CD8-positive, alpha-beta T cell (primary cell): ENCODE measurements at regions of chr1 and their contacts with region 1.

Region 1: DNA sequence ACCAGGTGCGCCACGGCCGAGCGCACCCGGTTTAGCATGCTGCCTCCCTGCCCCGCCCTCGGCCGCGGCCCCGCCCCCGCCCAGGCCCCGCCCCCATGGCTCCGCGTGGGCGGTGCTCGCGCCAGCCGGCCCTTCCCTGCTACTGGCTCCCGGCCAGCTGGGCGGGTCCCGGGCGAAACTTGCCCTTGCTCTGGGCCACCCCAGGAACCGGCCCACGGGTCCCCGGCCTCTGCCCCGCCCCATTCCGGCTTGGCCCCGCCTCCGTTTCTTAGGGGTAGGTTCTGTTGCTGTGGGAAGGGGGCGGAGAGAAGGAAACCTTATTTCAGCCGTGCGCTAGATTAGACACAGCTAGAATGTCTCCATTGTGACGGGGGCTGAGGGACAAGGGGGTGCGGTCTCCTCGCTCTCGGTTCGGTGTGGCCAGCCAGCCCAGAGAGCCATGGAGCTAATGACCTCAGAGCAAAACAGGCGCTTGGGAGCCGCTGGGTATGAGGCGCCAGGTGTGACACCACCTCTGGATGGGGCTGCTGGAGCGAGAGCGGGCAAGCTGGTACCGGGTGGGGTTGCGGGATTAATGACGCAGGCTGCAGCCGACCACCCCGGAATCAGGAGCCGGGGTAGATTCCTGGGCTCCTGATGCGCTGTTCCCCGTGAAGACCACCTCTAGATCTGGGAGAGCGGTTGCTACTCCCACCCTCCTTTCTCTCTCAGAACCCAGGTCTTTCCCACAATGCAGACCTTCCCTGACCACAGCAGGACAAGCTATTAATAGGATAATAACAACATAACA is at the start of gene PPM1J:
- DNase-seq: peak; percentile 90 to 97 (median 95)
- ATAC-seq: peak; percentile 82
- H3K4me3 ChIP-seq: peak within 1 kb of the TSS; percentile 52 to 67
- H3K4me3 Mint-ChIP-seq: peak within 1 kb of the TSS; percentile 90
- H3K27ac ChIP-seq: peak within 1 kb of the TSS; percentile 10 to 42
- H3K27ac Mint-ChIP-seq: peak within 1 kb of the TSS; percentile 88
- H3K4me1 ChIP-seq: peaks cover 25% of the 10 kb centered on the region
- H3K4me1 Mint-ChIP-seq: peaks cover 21% of the 10 kb centered on the region
- H3K27me3 ChIP-seq: peaks cover 0 to 10% of the 10 kb centered on the region in 2 experiments
- H3K27me3 Mint-ChIP-seq: peaks cover 12% of the 10 kb centered on the region
- CTCF ChIP-seq: no peak
- total RNA-seq, gene PPM1J: 0.57 to 0.69 TPM

Region 2: GRCh38 chr1:112390775-112391602 is 324.5 kb before region 1 on chr1:
- CTCF ChIA-PET with region 1: interaction called, 32 read pairs
- POLR2A ChIA-PET with region 1: interaction called, 3 read pairs
- intact Hi-C with region 1: loop called in 1 of 2 experiments (anchors 1 kb)
- DNase-seq: peak; percentile 51 to 89 (median 75)
- ATAC-seq: peak; percentile 89
- H3K4me3 ChIP-seq: no peak overlapping the region
- H3K4me3 Mint-ChIP-seq: no peak overlapping the region
- H3K27ac ChIP-seq: no peak overlapping the region
- H3K27ac Mint-ChIP-seq: no peak overlapping the region
- H3K4me1 ChIP-seq: peaks cover 10% of the 10 kb centered on the region
- H3K4me1 Mint-ChIP-seq: peaks cover 10% of the 10 kb centered on the region
- H3K27me3 ChIP-seq: peaks cover 7 to 11% of the 10 kb centered on the region in 2 experiments
- H3K27me3 Mint-ChIP-seq: peaks cover 46% of the 10 kb centered on the region
- CTCF ChIP-seq: peak; percentile 85

Region 3: GRCh38 chr1:112619520-112620376 is 95.7 kb before region 1 on chr1 and contains the start of gene CAPZA1:
- CTCF ChIA-PET with region 1: interaction called, 9 read pairs
- POLR2A ChIA-PET with region 1: interaction called, 19 read pairs
- intact Hi-C with region 1: loop called (anchors 1 to 2 kb)
- DNase-seq: peak; percentile 83 to 96 (median 89)
- ATAC-seq: peak; percentile 65
- H3K4me3 ChIP-seq: peak within 1 kb of the TSS; percentile 85 to 88
- H3K4me3 Mint-ChIP-seq: peak within 1 kb of the TSS; percentile 98
- H3K27ac ChIP-seq: peak within 1 kb of the TSS; percentile 98 to 100
- H3K27ac Mint-ChIP-seq: peak within 1 kb of the TSS; percentile 100
- H3K4me1 ChIP-seq: peaks cover 31% of the 10 kb centered on the region
- H3K4me1 Mint-ChIP-seq: peaks cover 44% of the 10 kb centered on the region
- H3K27me3 ChIP-seq: no peaks in the 10 kb centered on the region
- H3K27me3 Mint-ChIP-seq: no peaks in the 10 kb centered on the region
- CTCF ChIP-seq: no peak
- total RNA-seq, gene CAPZA1: 185 to 196 TPM

Region 4: GRCh38 chr1:112798292-112798691 is 82.8 kb after region 1 on chr1:
- CTCF ChIA-PET with region 1: interaction called, 36 read pairs
- POLR2A ChIA-PET with region 1: no interaction called
- intact Hi-C with region 1: no loop called
- DNase-seq: no peak
- ATAC-seq: no peak
- H3K4me3 ChIP-seq: no peak overlapping the region
- H3K4me3 Mint-ChIP-seq: no peak overlapping the region
- H3K27ac ChIP-seq: no peak overlapping the region
- H3K27ac Mint-ChIP-seq: no peak overlapping the region
- H3K4me1 ChIP-seq: no peaks in the 10 kb centered on the region
- H3K4me1 Mint-ChIP-seq: no peaks in the 10 kb centered on the region
- H3K27me3 ChIP-seq: no peaks in the 10 kb centered on the region
- H3K27me3 Mint-ChIP-seq: no peaks in the 10 kb centered on the region
- CTCF ChIP-seq: no peak

Region 5: GRCh38 chr1:112882271-112882744 is 166.8 kb after region 1 on chr1:
- CTCF ChIA-PET with region 1: interaction called, 8 read pairs
- POLR2A ChIA-PET with region 1: no interaction called
- intact Hi-C with region 1: loop called (anchors 1 to 2 kb)
- DNase-seq: no peak
- ATAC-seq: no peak
- H3K4me3 ChIP-seq: no peak overlapping the region
- H3K4me3 Mint-ChIP-seq: no peak overlapping the region
- H3K27ac ChIP-seq: no peak overlapping the region
- H3K27ac Mint-ChIP-seq: peak overlapping the region; percentile 37
- H3K4me1 ChIP-seq: no peaks in the 10 kb centered on the region
- H3K4me1 Mint-ChIP-seq: no peaks in the 10 kb centered on the region
- H3K27me3 ChIP-seq: no peaks in the 10 kb centered on the region
- H3K27me3 Mint-ChIP-seq: peaks cover 3% of the 10 kb centered on the region
- CTCF ChIP-seq: no peak

Region 6: DNA sequence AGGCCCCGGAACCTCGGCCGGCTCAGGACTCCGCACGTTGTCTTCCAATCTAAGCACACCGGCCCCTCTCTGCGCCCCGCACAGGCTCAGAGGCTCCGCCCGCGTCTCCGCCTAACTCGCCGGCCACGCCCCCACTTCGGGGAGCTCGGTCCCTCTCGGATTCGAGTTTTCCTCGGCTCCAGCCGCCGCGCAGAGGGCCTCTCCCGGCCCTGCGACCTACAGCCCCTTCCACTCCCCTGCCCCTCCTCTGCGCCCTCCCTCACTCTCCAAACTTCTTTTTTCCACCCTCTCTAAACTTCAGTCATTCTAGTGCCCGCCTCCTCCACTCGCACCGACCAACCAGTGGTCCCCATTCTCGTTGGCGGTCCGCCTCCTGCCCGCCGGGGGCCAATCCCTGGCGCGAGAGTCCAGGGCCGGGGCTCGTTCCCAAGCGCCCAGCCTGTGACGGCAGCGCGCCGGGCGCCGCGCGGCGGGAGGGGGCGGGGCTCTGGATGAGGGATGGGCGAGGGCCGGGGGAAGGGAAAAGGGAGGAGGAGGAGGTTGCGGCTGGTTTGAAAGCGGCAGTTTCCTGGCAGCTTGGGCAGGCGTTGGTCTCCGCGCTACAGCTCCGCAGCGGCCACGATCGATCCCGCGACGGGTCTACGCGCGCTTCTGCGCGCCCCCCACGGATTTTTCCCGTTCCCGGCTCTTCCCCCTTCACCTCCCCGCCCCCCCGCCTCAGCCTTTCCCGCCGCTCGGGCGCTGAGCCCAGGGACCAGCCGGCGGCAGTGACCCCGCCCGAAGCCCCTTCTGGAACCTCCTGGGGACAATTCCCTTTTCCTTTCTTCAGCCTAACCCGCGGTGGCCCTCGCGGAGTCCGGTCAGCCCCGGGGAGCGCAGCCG is 674.7 kb after region 1 on chr1 and contains the start of gene MAGI3:
- CTCF ChIA-PET with region 1: interaction called, 4 read pairs
- POLR2A ChIA-PET with region 1: no interaction called
- intact Hi-C with region 1: loop called (anchors 2 to 5 kb)
- DNase-seq: peak; percentile 70 to 93 (median 88)
- ATAC-seq: peak; percentile 91
- H3K4me3 ChIP-seq: peak within 1 kb of the TSS; percentile 94 to 97
- H3K4me3 Mint-ChIP-seq: peak within 1 kb of the TSS; percentile 95
- H3K27ac ChIP-seq: peak within 1 kb of the TSS; percentile 30 to 47
- H3K27ac Mint-ChIP-seq: peak within 1 kb of the TSS; percentile 84
- H3K4me1 ChIP-seq: peaks cover 13% of the 10 kb centered on the region
- H3K4me1 Mint-ChIP-seq: peaks cover 24% of the 10 kb centered on the region
- H3K27me3 ChIP-seq: peaks cover 0 to 5% of the 10 kb centered on the region in 2 experiments
- H3K27me3 Mint-ChIP-seq: peaks cover 12% of the 10 kb centered on the region
- CTCF ChIP-seq: no peak
- total RNA-seq, gene MAGI3: 1.7 to 3.2 TPM